GM10248 (cell line): ENCODE measurements at regions of chr16 and their contacts with region 1.

Region 1: GRCh38 chr16:70151391-70151790 is 22.2 kb upstream of the CLEC18C start:
- DNase-seq: peak; percentile 24
- CTCF ChIP-seq: no peak

Region 2: GRCh38 chr16:69031877-69032301 is 1119.5 kb before region 1 on chr16:
- CTCF ChIA-PET with region 1: no interaction called
- POLR2A ChIA-PET with region 1: no interaction called
- DNase-seq: no peak
- CTCF ChIP-seq: no peak

Region 3: DNA sequence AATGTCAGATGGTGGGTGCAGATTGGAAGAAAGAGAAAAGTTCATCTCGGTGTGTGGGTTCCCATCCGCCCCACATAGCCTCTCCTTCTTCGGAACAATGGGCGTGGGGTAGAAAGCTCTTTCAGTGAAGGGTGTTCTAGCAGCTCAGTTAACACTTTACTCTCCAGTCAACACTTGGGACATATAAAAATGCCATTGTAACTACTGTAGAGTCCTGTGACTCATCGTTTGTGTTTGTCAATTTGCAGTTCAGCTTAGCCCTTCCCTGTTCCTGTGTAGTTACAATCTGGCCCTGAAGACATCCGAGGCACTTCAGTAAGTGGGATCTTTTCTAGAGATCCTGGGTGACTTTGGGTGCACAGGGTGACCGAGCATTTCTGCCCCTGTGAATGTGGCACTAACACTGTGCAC is 10.7 kb after region 1 on chr16:
- CTCF ChIA-PET with region 1: interaction called, 13 read pairs
- POLR2A ChIA-PET with region 1: no interaction called
- DNase-seq: peak; percentile 14
- CTCF ChIP-seq: no peak